ENCODE measurements at regions of chr2 and their contacts with region 1.

Region 1: DNA sequence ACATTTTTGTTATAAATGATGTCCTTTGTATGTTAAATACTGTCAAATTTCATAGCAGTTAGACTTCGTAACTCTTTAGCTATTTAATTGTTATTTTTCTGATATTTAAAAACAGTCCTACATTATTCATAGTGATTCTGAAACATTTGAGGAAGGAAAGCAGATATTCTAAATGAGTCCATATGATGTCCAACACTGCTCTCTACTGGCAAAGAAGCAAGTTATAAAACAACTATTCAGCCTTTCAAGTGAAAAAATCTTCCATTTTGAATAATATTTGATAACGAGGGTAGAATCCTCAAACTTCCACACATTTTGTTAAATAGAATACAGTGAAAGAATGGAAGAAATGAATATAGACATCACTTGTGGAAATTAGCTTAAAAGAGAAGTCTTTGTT is 220.8 kb downstream of the GULP1 start:
- DNase-seq: no peak
- H3K4me3 ChIP-seq: no peak overlapping the region
- H3K27ac ChIP-seq: no peak overlapping the region
- H3K4me1 ChIP-seq: peaks cover 0 to 4% (median 2%) of the 10 kb centered on the region in 4 donors
- H3K27me3 ChIP-seq: no peaks in the 10 kb centered on the region
- CTCF ChIP-seq: peak; percentile 9 to 52 (median 28)
- EP300 ChIP-seq: no peak
- POLR2A ChIP-seq: no peak

Region 2: DNA sequence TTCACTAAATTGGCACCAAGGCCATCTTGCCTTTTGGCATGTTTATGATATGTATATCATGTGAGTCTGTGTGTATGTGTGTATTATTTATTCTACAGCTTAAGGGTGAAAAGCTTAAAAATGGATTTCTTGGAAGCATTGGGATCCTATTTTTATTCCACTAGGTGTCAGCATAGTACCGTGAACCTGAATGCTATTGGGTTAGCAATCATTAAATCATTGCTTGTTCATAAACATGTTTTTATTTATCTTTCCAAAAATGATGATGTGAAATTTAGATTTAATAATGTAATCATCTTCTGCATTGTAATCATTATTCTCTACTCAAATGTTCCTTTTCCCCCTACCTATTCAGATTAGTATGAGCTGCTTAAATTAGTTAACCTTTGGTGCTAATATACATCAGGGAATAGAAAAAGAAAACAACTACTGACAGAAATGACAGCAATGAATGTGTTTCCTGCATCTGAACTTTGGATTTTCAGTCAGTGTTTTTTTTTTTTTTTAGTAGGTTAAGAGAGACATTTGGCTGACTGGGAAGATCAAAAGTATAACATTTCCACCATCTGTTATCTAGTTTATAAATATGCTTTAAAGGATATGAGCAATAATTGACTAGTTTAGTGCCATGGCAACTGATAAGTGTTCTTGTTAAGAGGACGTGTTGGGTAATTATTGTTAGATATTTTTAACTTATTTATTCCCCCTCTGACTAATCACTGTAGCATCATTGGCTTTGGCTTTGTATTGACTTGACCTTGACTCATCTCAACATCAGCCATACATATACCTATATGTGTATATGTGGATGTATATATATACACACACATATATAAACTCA is 1649.4 kb before region 1 on chr2:
- intact Hi-C with region 1: loop called (anchors 10 kb)
- DNase-seq: no peak
- H3K4me3 ChIP-seq: no peak overlapping the region
- H3K27ac ChIP-seq: no peak overlapping the region
- H3K4me1 ChIP-seq: no peaks in the 10 kb centered on the region
- H3K27me3 ChIP-seq: no peaks in the 10 kb centered on the region
- CTCF ChIP-seq: peak in 2 of 4 experiments; percentile 18 to 65
- EP300 ChIP-seq: no peak
- POLR2A ChIP-seq: no peak

Region 3: DNA sequence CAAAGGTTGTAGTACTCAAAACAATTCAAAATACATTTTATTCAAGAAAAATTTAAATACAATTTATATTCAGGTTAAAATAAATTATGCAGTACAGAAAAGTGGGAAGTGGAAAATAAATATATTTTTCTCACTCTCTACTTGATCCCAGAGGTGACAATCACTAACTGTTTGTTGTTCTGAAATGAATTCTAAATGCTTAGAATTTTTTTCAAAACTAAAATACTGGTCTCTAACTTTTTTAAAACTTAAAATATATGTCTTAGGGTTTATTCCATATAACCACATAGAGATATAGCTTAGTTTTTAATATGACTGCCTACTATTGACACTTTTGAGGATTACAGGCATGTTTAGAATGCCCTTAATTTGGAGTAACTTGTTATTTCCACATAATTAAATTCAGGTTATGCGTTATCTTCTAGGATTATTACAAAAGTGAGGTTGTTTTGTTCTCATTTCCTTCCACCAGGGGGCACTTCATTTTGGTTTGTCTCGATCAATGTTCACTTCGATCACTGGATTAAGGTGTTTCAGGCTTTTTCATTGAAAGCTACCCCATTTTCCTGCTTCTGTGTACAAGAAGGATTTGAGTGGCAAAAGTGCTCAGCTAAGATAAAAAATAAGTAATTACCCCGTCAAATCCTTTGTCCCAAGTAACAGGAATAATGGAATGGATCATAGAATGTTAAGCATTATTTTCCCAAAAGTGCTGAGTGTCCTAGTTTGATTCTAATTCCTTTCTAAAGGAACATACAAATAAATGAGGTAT is 931.1 kb before region 1 on chr2:
- intact Hi-C with region 1: loop called (anchors 10 kb)
- DNase-seq: no peak
- H3K4me3 ChIP-seq: peak overlapping the region in 3 of 4 donors; percentile 11 to 30 (median 20)
- H3K27ac ChIP-seq: no peak overlapping the region
- H3K4me1 ChIP-seq: peaks cover 0 to 10% (median 2%) of the 10 kb centered on the region in 4 donors
- H3K27me3 ChIP-seq: no peaks in the 10 kb centered on the region
- CTCF ChIP-seq: peak; percentile 38 to 76 (median 61)
- EP300 ChIP-seq: no peak
- POLR2A ChIP-seq: no peak

Region 4: GRCh38 chr2:188291617-188292347 is 220.7 kb before region 1 on chr2 and contains the start of gene GULP1:
- intact Hi-C with region 1: loop called (anchors 1 kb)
- DNase-seq: peak; percentile 90
- H3K4me3 ChIP-seq: peak within 1 kb of the TSS; percentile 77 to 90 (median 84)
- H3K27ac ChIP-seq: peak within 1 kb of the TSS; percentile 92 to 98 (median 95)
- H3K4me1 ChIP-seq: peaks cover 0 to 33% (median 26%) of the 10 kb centered on the region in 4 donors
- H3K27me3 ChIP-seq: no peaks in the 10 kb centered on the region
- CTCF ChIP-seq: peak; percentile 39 to 72 (median 57)
- EP300 ChIP-seq: no peak
- POLR2A ChIP-seq: no peak
- total RNA-seq, gene GULP1: 50.9 to 56.1 (median 53.5) TPM